ENCODE measurements at regions of chr1 and their contacts with region 1.

Region 1: GRCh38 chr1:94335950-94336349 is 82.2 kb upstream of the ABCD3 start:
- DNase-seq: peak; percentile 51
- H3K4me3 ChIP-seq: peak overlapping the region in 1 of 2 experiments; percentile 46; a peak in 1 of 4 replicates
- H3K27ac ChIP-seq: no peak overlapping the region
- H3K4me1 ChIP-seq: peaks cover 6 to 11% of the 10 kb centered on the region in 2 experiments; a peak in 3 of 4 replicates
- H3K27me3 ChIP-seq: 0 out of 2 replicates have a peak, but pooled peaks cover 4% of the 10 kb centered on the region
- CTCF ChIP-seq: peak; percentile 99
- EP300 ChIP-seq: no peak
- RAD21 ChIP-seq: peak; percentile 100

Region 2: DNA sequence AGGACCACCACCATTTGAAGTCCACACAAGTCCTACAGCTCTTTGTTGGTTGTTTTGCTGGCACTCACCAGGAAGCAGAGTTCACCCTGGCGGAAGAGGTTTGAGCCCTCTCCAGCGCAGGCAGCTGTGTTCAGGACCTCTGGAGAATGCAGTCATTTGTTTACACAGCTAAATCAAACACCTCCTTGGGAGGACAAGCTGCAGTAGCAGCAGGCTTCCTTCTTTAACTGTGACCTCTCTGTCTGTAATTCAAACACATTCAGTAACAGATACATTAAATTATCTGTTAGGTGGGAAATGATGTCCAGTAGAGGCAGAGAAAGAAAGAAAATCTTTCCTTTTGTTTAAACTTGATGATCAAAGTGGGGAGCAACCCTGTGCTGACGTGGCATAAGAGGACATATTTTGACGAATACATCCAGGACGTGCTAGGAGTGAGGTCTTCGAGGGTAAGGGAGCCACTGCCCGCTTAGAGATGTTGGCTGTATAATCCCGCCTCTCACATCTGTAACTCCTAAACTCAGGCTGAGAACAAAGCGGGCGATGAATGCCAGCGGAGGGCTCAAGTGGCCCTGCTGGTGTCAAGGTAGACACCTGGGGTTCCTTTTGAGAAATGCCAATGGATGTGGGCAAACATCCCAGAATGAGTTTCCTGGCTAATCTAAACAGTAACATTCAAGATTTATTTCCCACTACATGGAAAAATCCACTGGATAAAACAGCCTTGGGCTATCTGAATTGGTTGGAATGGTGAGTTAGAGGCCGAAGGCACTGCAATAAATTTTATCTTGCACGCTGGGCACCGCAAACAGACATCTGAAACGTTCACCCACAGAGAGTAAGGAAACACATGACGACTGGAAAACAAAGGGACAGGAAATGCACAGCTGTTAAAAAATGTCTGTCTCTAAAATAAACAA is 266.7 kb before region 1 on chr1:
- CTCF ChIA-PET with region 1: interaction called, 427 read pairs
- POLR2A ChIA-PET with region 1: no interaction called
- DNase-seq: no peak
- H3K4me3 ChIP-seq: no peak overlapping the region
- H3K27ac ChIP-seq: no peak overlapping the region
- H3K4me1 ChIP-seq: peaks cover 14 to 36% of the 10 kb centered on the region in 2 experiments; a peak in 3 of 4 replicates
- H3K27me3 ChIP-seq: no peaks in the 10 kb centered on the region
- CTCF ChIP-seq: no peak
- EP300 ChIP-seq: no peak
- RAD21 ChIP-seq: no peak

Region 3: GRCh38 chr1:94228640-94229375 is 107.1 kb before region 1 on chr1:
- CTCF ChIA-PET with region 1: interaction called, 186 read pairs
- POLR2A ChIA-PET with region 1: no interaction called
- DNase-seq: no peak
- H3K4me3 ChIP-seq: no peak overlapping the region
- H3K27ac ChIP-seq: no peak overlapping the region
- H3K4me1 ChIP-seq: peaks cover 0 to 17% of the 10 kb centered on the region in 2 experiments; a peak in 2 of 4 replicates
- H3K27me3 ChIP-seq: no peaks in the 10 kb centered on the region
- CTCF ChIP-seq: no peak
- EP300 ChIP-seq: no peak
- RAD21 ChIP-seq: no peak

Region 4: GRCh38 chr1:94260635-94261387 is 75.1 kb before region 1 on chr1:
- CTCF ChIA-PET with region 1: interaction called, 12 read pairs
- POLR2A ChIA-PET with region 1: no interaction called
- DNase-seq: no peak
- H3K4me3 ChIP-seq: no peak overlapping the region
- H3K27ac ChIP-seq: no peak overlapping the region
- H3K4me1 ChIP-seq: peaks cover 18 to 28% of the 10 kb centered on the region in 2 experiments; a peak in 3 of 4 replicates
- H3K27me3 ChIP-seq: no peaks in the 10 kb centered on the region
- CTCF ChIP-seq: no peak
- EP300 ChIP-seq: no peak
- RAD21 ChIP-seq: no peak

Region 5: GRCh38 chr1:94316836-94317789 is 18.8 kb before region 1 on chr1:
- CTCF ChIA-PET with region 1: interaction called, 38 read pairs
- POLR2A ChIA-PET with region 1: interaction called, 3 read pairs
- DNase-seq: no peak
- H3K4me3 ChIP-seq: no peak overlapping the region
- H3K27ac ChIP-seq: no peak overlapping the region
- H3K4me1 ChIP-seq: peaks cover 7 to 13% of the 10 kb centered on the region in 2 experiments; a peak in 3 of 4 replicates
- H3K27me3 ChIP-seq: no peaks in the 10 kb centered on the region
- CTCF ChIP-seq: no peak
- EP300 ChIP-seq: no peak
- RAD21 ChIP-seq: no peak

Region 6: DNA sequence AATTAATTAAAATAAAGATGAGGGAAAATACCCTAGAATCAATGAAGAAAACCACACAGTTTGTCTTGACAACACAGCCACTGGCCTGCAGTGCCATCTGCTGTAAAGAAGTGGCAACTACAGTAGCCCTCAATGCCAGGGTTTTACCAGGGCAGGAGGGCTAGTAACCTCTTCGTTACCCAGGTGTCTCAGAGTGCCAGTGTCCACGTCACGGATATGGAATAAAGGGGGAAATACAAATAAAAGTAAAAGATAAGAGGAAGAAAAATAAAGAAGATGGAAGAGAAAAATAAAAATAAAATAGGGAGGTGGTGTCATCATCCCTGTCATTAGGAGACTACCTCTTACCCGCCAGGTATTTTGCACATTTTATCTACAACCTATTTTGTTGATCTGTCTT is 470.0 kb after region 1 on chr1:
- CTCF ChIA-PET with region 1: interaction called, 20 read pairs
- POLR2A ChIA-PET with region 1: no interaction called
- DNase-seq: peak; percentile 63
- H3K4me3 ChIP-seq: no peak overlapping the region
- H3K27ac ChIP-seq: no peak overlapping the region
- H3K4me1 ChIP-seq: peaks cover 6 to 29% of the 10 kb centered on the region in 2 experiments; a peak in 3 of 4 replicates
- H3K27me3 ChIP-seq: no peaks in the 10 kb centered on the region
- CTCF ChIP-seq: peak; percentile 97
- EP300 ChIP-seq: no peak
- RAD21 ChIP-seq: peak; percentile 97

Measured in SK-N-SH (cell line).